ENCODE measurements at regions of chr5 and their contacts with region 1.

Region 1: GRCh38 chr5:78858364-78858763 is 126.7 kb downstream of the ARSB start:
- DNase-seq: no peak
- H3K4me3 ChIP-seq: no peak overlapping the region
- H3K4me3 Mint-ChIP-seq: no peak overlapping the region
- H3K27ac Mint-ChIP-seq: no peak overlapping the region
- H3K4me1 ChIP-seq: no peaks in the 10 kb centered on the region
- H3K4me1 Mint-ChIP-seq: no peaks in the 10 kb centered on the region
- H3K27me3 ChIP-seq: no peaks in the 10 kb centered on the region
- H3K27me3 Mint-ChIP-seq: no peaks in the 10 kb centered on the region
- CTCF ChIP-seq: no peak

Region 2: DNA sequence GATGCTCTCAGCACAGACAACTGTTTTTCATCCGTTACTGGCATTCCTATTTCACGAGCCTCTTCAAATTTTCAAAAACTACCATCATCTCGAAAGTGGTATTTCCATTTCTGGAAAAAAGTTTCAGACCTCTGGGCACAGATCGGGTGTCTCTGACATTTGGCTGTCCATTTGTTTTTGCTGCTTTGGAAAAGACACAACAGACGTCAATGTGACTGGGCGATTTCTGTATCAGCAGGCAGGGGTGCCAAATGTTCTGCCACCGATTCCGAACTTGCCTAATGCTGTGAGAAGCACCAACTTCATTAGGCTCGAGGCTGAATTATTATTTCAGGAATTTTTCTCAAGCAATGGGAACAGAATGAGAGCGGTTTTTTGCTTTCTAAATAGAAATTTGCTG is 21.2 kb after region 1 on chr5:
- CTCF ChIA-PET with region 1: no interaction called
- POLR2A ChIA-PET with region 1: no interaction called
- intact Hi-C with region 1: loop called (anchors 2 kb)
- DNase-seq: no peak
- H3K4me3 ChIP-seq: no peak overlapping the region
- H3K4me3 Mint-ChIP-seq: no peak overlapping the region
- H3K27ac Mint-ChIP-seq: no peak overlapping the region
- H3K4me1 ChIP-seq: no peaks in the 10 kb centered on the region
- H3K4me1 Mint-ChIP-seq: peaks cover 7% of the 10 kb centered on the region
- H3K27me3 ChIP-seq: no peaks in the 10 kb centered on the region
- H3K27me3 Mint-ChIP-seq: no peaks in the 10 kb centered on the region
- CTCF ChIP-seq: no peak

Measured in Caco-2 (cell line).